MCF 10A (cell line): ENCODE measurements at regions of chr17 and their contacts with region 1.

Region 1: GRCh38 chr17:76523084-76524037 is 14.1 kb downstream of the CYGB start:
- DNase-seq: peak; percentile 67
- H3K4me3 Mint-ChIP-seq: no peak overlapping the region
- H3K27ac Mint-ChIP-seq: no peak overlapping the region
- H3K4me1 Mint-ChIP-seq: peaks cover 11% of the 10 kb centered on the region
- H3K27me3 Mint-ChIP-seq: peaks cover 25% of the 10 kb centered on the region
- CTCF ChIP-seq: peak; percentile 99

Region 2: DNA sequence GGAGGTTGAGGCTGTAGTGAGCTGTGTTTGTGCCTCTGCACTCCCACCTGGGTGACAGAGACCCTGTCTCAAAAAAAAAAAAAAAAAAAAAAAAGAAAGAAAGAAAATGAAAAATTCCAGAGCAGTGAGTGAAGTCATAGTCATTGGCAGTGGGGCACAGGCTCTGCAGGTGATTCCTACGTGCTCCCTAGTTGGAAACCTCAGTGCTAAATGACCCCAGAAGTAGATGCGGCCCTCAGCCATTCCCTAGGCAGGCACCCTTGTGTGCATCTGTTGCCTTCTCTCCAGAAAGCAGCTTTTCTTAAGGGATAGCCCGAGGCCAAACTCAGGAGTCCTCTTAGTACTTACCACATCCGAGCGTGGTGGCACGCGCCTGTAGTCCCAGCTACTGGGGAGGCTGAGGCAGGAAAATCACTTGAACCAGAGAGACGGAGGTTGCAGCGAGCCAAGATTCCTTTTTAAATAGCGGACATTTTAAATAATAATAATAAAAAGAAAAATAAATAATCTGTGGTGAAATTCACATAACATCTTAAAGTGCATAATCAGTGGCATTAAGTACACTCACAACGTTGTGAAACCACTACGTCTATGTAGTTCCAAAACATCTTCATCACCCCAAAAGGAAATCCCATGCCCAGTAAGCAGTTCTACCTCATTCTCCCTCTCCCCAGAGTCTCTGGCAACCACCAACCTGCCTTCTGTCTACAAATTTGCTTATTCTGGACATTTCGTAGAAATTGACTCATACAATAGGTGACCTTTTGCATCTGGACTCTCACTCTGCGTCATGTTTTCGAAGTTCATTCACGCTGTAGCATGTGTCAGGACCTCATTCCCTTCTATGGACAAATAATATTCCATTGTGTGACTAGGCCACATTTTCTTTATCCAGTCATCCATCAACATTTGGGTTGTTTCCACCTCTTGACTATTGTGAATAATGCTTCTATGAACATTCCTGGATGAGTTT is 151.4 kb before region 1 on chr17:
- CTCF ChIA-PET with region 1: no interaction called
- POLR2A ChIA-PET with region 1: no interaction called
- intact Hi-C with region 1: no loop called
- DNase-seq: peak; percentile 71
- H3K4me3 Mint-ChIP-seq: no peak overlapping the region
- H3K27ac Mint-ChIP-seq: peak overlapping the region; percentile 31
- H3K4me1 Mint-ChIP-seq: peaks cover 15% of the 10 kb centered on the region
- H3K27me3 Mint-ChIP-seq: no peaks in the 10 kb centered on the region
- CTCF ChIP-seq: no peak

Region 3: GRCh38 chr17:76547184-76547641 is 23.9 kb after region 1 on chr17:
- CTCF ChIA-PET with region 1: interaction called, 41 read pairs
- POLR2A ChIA-PET with region 1: interaction called, 29 read pairs
- intact Hi-C with region 1: loop called (anchors 1 kb)
- DNase-seq: peak; percentile 81
- H3K4me3 Mint-ChIP-seq: no peak overlapping the region
- H3K27ac Mint-ChIP-seq: no peak overlapping the region
- H3K4me1 Mint-ChIP-seq: peaks cover 10% of the 10 kb centered on the region
- H3K27me3 Mint-ChIP-seq: peaks cover 12% of the 10 kb centered on the region
- CTCF ChIP-seq: peak; percentile 51

Region 4: DNA sequence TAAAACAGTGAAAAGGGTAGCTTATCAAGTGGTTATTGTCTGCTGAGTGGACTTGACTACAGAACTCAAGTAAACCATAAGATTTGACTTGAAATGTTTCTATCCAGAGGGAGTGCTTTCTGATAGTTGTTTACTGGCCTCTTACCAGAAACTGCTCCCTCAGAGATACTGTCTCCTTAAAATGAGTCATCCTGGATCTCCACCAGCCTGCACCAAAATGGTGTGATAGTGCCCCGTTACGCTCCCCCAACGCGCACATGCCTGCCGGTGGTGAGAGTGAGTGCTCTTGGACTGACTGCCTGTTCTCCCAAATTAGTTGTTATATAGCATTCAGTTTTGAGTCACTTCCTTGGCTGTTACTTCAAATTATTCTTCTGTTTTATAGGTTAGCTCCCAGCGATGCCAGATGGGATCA is 39.4 kb after region 1 on chr17:
- CTCF ChIA-PET with region 1: interaction called, 33 read pairs
- POLR2A ChIA-PET with region 1: interaction called, 55 read pairs
- intact Hi-C with region 1: no loop called
- DNase-seq: peak; percentile 91
- H3K4me3 Mint-ChIP-seq: peak overlapping the region; percentile 92
- H3K27ac Mint-ChIP-seq: no peak overlapping the region
- H3K4me1 Mint-ChIP-seq: peaks cover 40% of the 10 kb centered on the region
- H3K27me3 Mint-ChIP-seq: no peaks in the 10 kb centered on the region
- CTCF ChIP-seq: no peak

Region 5: GRCh38 chr17:76585818-76586593 is 62.6 kb after region 1 on chr17 and contains the start of gene ST6GALNAC2:
- CTCF ChIA-PET with region 1: interaction called, 6 read pairs
- POLR2A ChIA-PET with region 1: interaction called, 3 read pairs
- intact Hi-C with region 1: loop called (anchors 1 kb)
- DNase-seq: peak; percentile 72
- H3K4me3 Mint-ChIP-seq: peak within 1 kb of the TSS; percentile 74
- H3K27ac Mint-ChIP-seq: no peak within 1 kb of the TSS
- H3K4me1 Mint-ChIP-seq: peaks cover 11% of the 10 kb centered on the region
- H3K27me3 Mint-ChIP-seq: no peaks in the 10 kb centered on the region
- CTCF ChIP-seq: peak; percentile 58
- total RNA-seq, gene ST6GALNAC2: 5.0 and 7.7 TPM in 2 replicates

Region 6: DNA sequence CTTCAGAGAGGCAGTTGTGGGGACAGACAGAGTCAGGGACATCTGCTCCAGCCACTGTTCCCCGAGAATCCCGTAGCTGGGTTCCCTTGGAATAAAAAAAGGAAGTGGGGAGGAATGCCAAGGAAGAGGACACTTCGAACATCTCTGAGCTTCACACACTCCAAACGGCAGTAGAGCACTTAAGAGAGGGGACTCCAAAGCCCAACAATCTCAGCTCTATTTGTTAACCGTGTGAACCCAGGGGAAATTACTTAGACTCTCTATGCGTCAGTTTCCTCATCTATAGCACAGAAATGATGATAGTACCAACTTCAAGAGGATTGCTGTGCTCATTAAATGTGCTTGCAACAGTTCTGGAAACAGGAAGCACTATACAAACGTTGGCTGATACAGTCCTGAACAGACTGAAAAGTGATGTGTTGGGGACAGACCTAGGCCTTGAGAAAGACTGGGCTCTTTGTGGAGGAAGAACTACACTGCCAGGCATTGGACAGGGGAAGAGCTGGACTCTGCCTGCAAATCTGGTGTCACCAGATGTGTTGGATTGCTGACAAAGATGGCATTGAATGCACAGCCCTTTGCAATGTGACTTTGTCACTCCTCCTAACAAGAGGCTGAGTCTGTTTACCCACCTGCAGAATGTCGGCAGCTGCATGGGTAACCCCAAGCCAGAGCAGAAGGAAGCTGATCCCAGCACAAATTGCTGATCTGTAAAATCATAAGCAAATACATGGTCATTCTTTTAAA is 74.5 kb after region 1 on chr17:
- CTCF ChIA-PET with region 1: interaction called, 11 read pairs
- POLR2A ChIA-PET with region 1: interaction called, 4 read pairs
- intact Hi-C with region 1: no loop called
- DNase-seq: no peak
- H3K4me3 Mint-ChIP-seq: no peak overlapping the region
- H3K27ac Mint-ChIP-seq: peak overlapping the region; percentile 16
- H3K4me1 Mint-ChIP-seq: peaks cover 20% of the 10 kb centered on the region
- H3K27me3 Mint-ChIP-seq: no peaks in the 10 kb centered on the region
- CTCF ChIP-seq: no peak

Region 7: GRCh38 chr17:76612977-76613851 is 89.9 kb after region 1 on chr17:
- CTCF ChIA-PET with region 1: no interaction called
- POLR2A ChIA-PET with region 1: no interaction called
- intact Hi-C with region 1: no loop called
- DNase-seq: peak; percentile 94
- H3K4me3 Mint-ChIP-seq: no peak overlapping the region
- H3K27ac Mint-ChIP-seq: no peak overlapping the region
- H3K4me1 Mint-ChIP-seq: peaks cover 11% of the 10 kb centered on the region
- H3K27me3 Mint-ChIP-seq: no peaks in the 10 kb centered on the region
- CTCF ChIP-seq: peak; percentile 14

Region 8: DNA sequence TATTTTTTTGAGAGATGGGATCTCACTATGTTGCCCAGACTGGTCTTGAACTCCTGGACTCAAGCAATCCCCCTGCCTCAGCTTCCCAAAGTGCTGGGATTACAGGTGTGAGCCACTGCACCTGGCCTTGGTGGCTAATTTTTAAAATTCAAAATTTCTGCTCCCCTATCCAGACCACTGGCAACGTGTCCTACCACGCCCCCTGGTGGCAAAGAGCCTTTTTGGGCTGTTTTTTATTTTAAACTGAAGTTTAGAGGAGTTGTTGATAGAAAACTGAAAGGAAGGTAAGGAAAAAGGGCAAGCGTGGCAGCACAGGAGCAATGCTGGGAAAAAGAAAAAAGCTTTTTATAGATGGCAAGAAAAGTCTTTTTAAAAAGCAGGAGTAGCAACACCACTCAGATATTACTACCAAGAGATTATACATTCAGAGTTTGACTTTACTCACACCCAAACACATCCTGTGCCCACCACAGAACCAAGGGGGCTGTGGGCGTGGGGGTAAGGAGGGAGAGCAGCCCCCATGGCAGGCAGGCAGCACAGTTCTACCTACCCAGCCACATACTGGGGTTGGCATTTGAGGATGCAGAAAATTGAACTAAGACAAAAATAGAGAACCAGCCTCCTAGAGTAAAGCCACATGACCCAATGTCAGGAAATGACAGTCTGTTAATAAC is 191.6 kb after region 1 on chr17:
- CTCF ChIA-PET with region 1: interaction called, 26 read pairs
- POLR2A ChIA-PET with region 1: no interaction called
- intact Hi-C with region 1: loop called (anchors 2 kb)
- DNase-seq: peak; percentile 67
- H3K4me3 Mint-ChIP-seq: no peak overlapping the region
- H3K27ac Mint-ChIP-seq: peak overlapping the region; percentile 55
- H3K4me1 Mint-ChIP-seq: peaks cover 13% of the 10 kb centered on the region
- H3K27me3 Mint-ChIP-seq: no peaks in the 10 kb centered on the region
- CTCF ChIP-seq: peak; percentile 74